ENCODE measurements at regions of chr9 and their contacts with region 1.

Region 1: DNA sequence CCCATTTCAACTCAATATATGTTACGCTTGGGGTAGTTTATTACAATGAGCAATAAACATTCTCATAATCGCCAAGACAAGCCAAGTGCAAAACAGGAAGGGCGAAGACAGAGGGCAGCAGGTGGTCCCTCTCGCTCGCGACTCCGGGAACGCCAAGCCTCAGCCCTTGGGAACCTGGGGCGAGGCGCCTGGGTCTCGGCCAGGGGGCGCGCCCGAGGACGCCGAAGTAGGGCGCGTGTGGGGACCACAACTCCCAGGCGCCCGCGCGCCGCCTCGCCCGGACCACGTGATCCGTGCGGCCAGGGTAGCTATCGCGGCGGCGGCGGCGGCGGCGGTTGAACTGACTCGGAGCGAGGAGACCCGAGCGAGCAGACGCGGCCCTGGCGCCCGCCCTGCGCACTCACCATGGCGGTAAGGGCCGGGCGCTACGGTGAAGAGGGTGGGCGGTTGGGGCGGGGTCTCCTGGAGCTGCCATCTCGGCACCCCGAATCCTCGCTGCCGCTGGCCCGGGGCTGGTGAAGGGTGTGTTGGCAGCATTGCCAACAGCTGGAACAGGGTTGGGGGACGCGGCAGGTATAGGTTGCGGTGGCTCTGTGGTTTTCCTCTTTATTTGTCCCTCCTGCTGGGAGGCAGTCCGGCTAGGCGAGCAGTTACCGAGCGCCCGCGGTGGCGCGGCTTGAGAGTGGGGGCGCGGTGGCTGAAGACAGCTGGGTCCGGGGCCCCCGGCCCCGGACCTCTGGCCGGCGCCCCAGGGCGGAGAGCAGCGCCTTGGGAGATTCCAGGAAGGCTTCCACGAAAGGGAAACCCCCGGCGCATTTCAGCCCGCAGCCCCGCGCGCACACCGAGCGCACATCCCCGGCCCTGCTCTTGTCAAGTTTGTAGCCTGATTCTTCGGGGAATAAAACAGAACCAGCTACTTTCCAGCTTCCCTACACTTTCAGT is at the start of gene SLC31A2:
- DNase-seq: peak; percentile 78 to 88 (median 82)
- H3K4me3 ChIP-seq: peak within 1 kb of the TSS; percentile 70
- H3K4me3 Mint-ChIP-seq: peak within 1 kb of the TSS; percentile 67 to 91 (median 83)
- H3K27ac ChIP-seq: peak within 1 kb of the TSS; percentile 28
- H3K27ac Mint-ChIP-seq: peak within 1 kb of the TSS; percentile 64 to 90 (median 77)
- H3K4me1 ChIP-seq: peaks cover 19% of the 10 kb centered on the region
- H3K4me1 Mint-ChIP-seq: peaks cover 28 to 43% (median 37%) of the 10 kb centered on the region in 3 donors
- H3K27me3 ChIP-seq: no peaks in the 10 kb centered on the region
- H3K27me3 Mint-ChIP-seq: peaks cover 2% of the 10 kb centered on the region in 2 donors
- total RNA-seq, gene SLC31A2: 5.4 to 5.9 TPM

Region 2: GRCh38 chr9:113135696-113136095 is 15.2 kb before region 1 on chr9:
- CTCF ChIA-PET with region 1: no interaction called
- POLR2A ChIA-PET with region 1: no interaction called
- DNase-seq: no peak
- H3K4me3 ChIP-seq: no peak overlapping the region
- H3K4me3 Mint-ChIP-seq: no peak overlapping the region
- H3K27ac ChIP-seq: no peak overlapping the region
- H3K27ac Mint-ChIP-seq: no peak overlapping the region
- H3K4me1 ChIP-seq: no peaks in the 10 kb centered on the region
- H3K4me1 Mint-ChIP-seq: no peaks in the 10 kb centered on the region
- H3K27me3 ChIP-seq: no peaks in the 10 kb centered on the region
- H3K27me3 Mint-ChIP-seq: peaks cover 3 to 22% of the 10 kb centered on the region in 2 donors

Region 3: GRCh38 chr9:113163001-113163400 is 12.1 kb after region 1 on chr9:
- CTCF ChIA-PET with region 1: interaction called, 11 read pairs
- POLR2A ChIA-PET with region 1: no interaction called
- DNase-seq: no peak
- H3K4me3 ChIP-seq: no peak overlapping the region
- H3K4me3 Mint-ChIP-seq: no peak overlapping the region
- H3K27ac ChIP-seq: no peak overlapping the region
- H3K27ac Mint-ChIP-seq: peak overlapping the region in 2 of 8 donors; percentile 14 to 46
- H3K4me1 ChIP-seq: no peaks in the 10 kb centered on the region
- H3K4me1 Mint-ChIP-seq: no peaks in the 10 kb centered on the region
- H3K27me3 ChIP-seq: no peaks in the 10 kb centered on the region
- H3K27me3 Mint-ChIP-seq: no peaks in the 10 kb centered on the region

Region 4: GRCh38 chr9:113196967-113197366 is 46.0 kb after region 1 on chr9:
- CTCF ChIA-PET with region 1: no interaction called
- POLR2A ChIA-PET with region 1: no interaction called
- DNase-seq: no peak
- H3K4me3 ChIP-seq: no peak overlapping the region
- H3K4me3 Mint-ChIP-seq: no peak overlapping the region
- H3K27ac ChIP-seq: no peak overlapping the region
- H3K27ac Mint-ChIP-seq: peak overlapping the region in 1 of 8 donors; percentile 19
- H3K4me1 ChIP-seq: no peaks in the 10 kb centered on the region
- H3K4me1 Mint-ChIP-seq: peaks cover 0 to 3% (median 0%) of the 10 kb centered on the region in 3 donors
- H3K27me3 ChIP-seq: no peaks in the 10 kb centered on the region
- H3K27me3 Mint-ChIP-seq: no peaks in the 10 kb centered on the region

Measured in CD8-positive, alpha-beta memory T cell (primary cell).